Mammary epithelial cell (primary cell): ENCODE measurements at regions of chr5 and their contacts with region 1.

Region 1: DNA sequence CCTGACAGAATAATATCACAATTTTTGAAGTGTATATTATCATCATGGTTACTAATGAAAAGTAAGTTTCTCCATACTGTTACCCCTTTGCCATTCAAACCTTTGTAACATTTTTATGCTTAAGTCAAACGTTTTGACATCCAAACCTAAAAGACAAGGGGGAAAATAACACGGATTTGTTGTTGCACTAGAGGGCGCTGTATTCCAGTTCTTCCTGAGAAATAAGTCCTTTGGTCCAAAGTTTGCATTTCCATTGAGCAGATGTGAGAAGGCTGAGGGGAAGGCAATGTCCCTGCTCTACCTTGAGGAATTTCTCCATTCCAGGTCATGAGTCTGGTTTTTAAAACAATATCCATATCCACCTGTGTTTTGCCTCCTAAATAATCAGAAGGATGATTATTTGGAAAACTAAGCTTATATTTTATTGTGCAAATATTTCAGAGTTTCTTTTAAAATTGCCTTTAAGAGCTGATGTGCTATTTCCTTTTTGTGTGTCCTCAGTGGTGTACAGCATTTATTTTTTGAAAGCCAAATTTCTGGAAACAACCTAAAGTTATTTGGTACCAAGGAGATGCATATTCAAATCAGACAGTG is 9.7 kb downstream of the LECT2 start:
- DNase-seq: peak; percentile 63
- H3K4me3 ChIP-seq: no peak overlapping the region
- H3K27ac ChIP-seq: no peak overlapping the region
- H3K4me1 ChIP-seq: no peaks in the 10 kb centered on the region
- H3K27me3 ChIP-seq: no peaks in the 10 kb centered on the region
- CTCF ChIP-seq: peak; percentile 51 to 75

Region 2: DNA sequence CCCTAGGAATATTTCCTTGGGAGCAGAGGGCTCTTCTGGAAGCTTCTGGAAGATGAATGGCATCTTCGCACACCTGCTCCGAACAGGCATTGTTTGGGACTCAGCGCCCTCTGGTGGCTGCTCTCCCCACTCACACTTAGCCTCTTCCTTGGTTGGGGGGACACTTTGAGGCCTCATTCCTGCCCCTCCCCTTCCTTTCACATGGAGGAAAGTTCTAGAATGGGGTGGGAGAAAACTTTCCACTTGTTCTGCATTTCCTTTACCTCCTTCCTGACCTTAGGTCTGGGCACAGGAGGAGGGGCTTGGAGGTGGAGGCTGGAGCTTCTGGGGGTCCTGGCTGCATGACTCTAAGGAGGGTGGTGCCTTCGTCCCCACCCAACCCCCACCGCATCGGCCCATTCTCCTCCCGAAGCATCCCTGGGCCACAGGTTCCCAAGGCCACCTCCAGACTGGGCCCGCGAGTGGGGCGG is 267.2 kb after region 1 on chr5:
- CTCF ChIA-PET with region 1: no interaction called
- dilution Hi-C with region 1: no loop called
- in situ Hi-C with region 1: no loop called
- intact Hi-C with region 1: loop called (anchors 10 kb)
- DNase-seq: no peak
- H3K4me3 ChIP-seq: no peak overlapping the region
- H3K27ac ChIP-seq: no peak overlapping the region
- H3K4me1 ChIP-seq: no peaks in the 10 kb centered on the region
- H3K27me3 ChIP-seq: no peaks in the 10 kb centered on the region
- CTCF ChIP-seq: peak; percentile 79 to 90